ENCODE measurements at regions of chr4 and their contacts with region 1.

Region 1: DNA sequence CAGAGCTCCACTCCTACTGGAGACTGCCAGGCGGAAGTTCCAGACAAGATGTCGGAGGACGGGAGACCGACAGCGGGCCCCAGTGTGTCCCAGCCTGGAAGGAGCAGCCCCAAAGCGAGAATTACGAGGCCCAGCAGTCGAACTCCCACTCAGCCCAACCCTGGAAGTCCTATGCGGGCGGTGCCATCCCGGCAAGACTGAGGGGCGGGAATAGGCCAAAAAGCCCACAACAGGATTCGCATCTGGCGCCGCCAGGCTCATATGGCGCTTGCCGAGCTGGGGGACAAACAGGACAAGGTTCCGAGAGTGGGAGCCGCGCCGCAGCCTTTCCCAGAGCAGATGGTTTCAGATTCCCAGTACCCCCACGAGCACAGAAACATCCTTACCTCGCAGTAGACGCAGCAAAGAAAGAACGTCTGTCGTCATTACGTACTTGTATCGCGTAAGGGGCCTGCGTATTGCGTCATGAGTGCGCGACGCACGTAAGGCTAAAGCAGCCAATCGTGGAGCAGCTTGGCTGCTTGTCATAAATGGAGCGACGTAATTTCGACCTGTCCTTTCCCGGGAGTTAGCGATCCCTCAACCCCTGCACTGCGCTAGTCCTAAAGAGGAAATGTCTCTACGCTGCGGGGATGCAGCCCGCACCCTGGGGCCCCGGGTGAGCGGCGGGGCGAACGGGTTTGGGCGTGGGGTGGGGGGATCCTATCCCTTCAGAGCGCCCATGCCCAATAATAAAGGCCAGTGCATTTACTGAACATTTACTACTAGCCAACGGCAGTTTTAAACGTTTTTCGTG is at the starts of genes LIAS and RPL9:
- DNase-seq: peak; percentile 99
- H3K4me3 ChIP-seq: peak within 1 kb of the TSS; percentile 95
- H3K27ac ChIP-seq: peak within 1 kb of the TSS; percentile 94
- H3K27me3 ChIP-seq: no peaks in the 10 kb centered on the region
- CTCF ChIP-seq: no peak
- polyA plus RNA-seq, gene LIAS: 8.6 and 13.1 TPM in 2 replicates
- polyA plus RNA-seq, gene RPL9: 2,183 and 3,111 TPM in 2 replicates

Region 2: DNA sequence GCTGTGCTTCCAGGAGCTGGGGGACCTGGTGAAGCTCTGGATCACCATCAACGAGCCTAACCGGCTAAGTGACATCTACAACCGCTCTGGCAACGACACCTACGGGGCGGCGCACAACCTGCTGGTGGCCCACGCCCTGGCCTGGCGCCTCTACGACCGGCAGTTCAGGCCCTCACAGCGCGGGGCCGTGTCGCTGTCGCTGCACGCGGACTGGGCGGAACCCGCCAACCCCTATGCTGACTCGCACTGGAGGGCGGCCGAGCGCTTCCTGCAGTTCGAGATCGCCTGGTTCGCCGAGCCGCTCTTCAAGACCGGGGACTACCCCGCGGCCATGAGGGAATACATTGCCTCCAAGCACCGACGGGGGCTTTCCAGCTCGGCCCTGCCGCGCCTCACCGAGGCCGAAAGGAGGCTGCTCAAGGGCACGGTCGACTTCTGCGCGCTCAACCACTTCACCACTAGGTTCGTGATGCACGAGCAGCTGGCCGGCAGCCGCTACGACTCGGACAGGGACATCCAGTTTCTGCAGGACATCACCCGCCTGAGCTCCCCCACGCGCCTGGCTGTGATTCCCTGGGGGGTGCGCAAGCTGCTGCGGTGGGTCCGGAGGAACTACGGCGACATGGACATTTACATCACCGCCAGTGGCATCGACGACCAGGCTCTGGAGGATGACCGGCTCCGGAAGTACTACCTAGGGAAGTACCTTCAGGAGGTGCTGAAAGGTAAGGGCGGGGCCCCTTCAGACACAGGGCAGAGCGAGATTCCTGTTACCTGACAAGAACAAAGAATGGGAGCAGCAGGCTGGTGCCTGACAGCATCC is 11.7 kb before region 1 on chr4:
- CTCF ChIA-PET with region 1: no interaction called
- POLR2A ChIA-PET with region 1: interaction called, 15 read pairs
- DNase-seq: no peak
- H3K4me3 ChIP-seq: 0 out of 2 replicates have a peak overlapping the region, but pooled peaks have one; percentile 2
- H3K27ac ChIP-seq: no peak overlapping the region
- H3K27me3 ChIP-seq: no peaks in the 10 kb centered on the region
- CTCF ChIP-seq: peak; percentile 7; the same call in 1 of the 2 replicates

Region 3: DNA sequence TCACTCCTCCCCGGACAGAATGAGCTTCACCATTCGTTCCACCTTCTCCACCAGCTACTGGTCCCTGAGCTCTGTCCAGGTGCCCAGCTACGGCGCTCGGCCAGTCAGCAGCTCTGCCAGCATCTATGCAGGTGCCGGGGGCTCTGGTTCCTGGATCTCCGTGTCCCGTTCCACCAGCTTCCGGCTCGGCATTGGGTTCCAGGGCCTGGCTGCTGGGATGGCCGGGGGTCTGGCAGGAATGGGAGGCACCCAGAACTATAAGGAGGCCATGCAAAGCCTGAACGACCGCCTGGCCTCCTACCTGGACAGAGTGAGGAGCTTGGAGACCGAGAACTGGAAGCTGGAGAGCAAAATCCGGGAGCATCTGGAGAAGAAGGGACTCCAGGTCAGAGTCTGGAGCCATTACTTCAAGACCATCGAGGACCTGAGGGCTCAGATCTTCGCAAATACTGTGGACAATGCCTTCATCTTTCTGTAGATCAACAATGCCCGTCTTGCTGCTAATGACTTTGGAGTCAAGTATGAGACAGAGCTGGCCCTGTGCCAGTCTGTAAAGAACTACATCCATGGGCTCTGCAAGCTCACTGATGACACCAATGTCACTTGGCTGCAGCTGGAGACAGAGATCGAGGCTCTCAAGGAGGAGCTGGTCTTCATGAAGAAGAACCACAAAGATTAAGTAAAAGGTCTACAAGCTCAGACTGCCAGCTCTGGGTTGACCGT is 561.7 kb after region 1 on chr4:
- CTCF ChIA-PET with region 1: no interaction called
- POLR2A ChIA-PET with region 1: no interaction called
- DNase-seq: no peak
- H3K4me3 ChIP-seq: no peak overlapping the region
- H3K27ac ChIP-seq: no peak overlapping the region
- H3K27me3 ChIP-seq: peaks cover 2% of the 10 kb centered on the region
- CTCF ChIP-seq: no peak

Measured in AG04450 (cell line).